ENCODE measurements at regions of chr1 and their contacts with region 1.

Region 1: DNA sequence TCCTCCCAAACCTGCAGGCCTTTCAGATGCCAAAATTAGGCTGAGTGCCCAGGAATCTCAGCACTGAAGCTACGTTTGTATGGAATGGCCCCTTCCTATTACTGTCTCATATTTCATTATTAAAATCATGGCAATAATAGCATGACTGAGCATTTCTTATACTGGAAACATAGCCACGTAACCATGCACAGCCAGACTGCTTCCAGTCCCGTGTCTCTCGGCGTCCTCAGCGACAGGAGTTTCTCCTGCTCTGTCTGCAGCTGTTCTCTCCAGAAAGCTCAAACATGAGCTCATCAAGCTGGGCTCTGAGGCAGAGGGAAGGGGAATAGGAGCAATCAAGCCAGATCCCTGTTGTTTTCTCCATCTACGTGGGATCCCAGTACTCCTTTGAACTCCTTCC is 104.0 kb downstream of the CDC7 start:
- DNase-seq: no peak
- ATAC-seq: peak in 1 of 2 donors; percentile 53

Region 2: DNA sequence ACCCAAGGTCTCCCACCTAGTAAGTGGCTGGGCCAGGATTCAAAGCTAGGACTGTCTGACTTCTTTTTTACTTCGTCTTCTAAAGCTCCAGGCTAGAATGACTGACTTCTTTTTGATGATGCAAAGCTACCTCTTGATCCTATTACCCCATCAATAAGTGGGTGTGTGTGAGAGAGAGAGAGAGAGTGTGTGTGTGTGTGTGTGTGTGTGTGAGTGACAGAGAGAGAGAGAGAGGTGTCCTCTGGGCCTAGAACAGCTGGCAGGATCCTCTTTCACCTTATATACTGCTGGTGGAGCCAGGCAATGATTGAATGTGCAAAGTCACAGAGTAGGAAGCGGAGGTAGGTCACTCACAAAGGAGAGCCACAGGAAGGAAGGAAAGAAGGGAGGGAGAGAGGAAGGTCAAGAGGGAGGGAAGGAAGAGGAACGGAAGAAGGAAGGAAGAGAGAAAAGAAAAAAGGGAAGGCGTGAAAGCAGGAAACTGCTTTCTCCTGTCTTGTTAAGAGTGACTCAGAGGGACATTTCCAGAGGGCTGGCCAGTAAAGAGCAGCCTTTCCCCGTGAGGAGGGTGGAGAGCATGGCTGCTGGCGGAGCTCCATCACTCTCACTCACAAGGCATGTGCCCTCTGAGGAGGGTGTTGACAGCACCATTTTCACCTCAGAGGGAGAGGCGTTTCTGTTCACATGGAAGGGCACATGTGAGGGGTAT is 35.1 kb before region 1 on chr1:
- intact Hi-C with region 1: loop called in 1 of 2 experiments (anchors 2 kb)
- DNase-seq: peak; percentile 91
- ATAC-seq: peak; percentile 99

Region 3: GRCh38 chr1:91707114-91707889 is 102.7 kb after region 1 on chr1:
- intact Hi-C with region 1: loop called in 1 of 2 experiments (anchors 5 kb)
- DNase-seq: no peak
- ATAC-seq: peak; percentile 62 to 84